Lower leg skin (tissue), 4 donors: ENCODE measurements at regions of chr13 and their contacts with region 1.

Region 1: GRCh38 chr13:98672944-98673545 is 79.4 kb downstream of the SLC15A1 start:
- DNase-seq: peak; percentile 80 to 95
- H3K4me3 ChIP-seq: no peak overlapping the region
- CTCF ChIP-seq: peak in 1 of 3 donors; percentile 86
- POLR2A ChIP-seq: no peak

Region 2: GRCh38 chr13:97359181-97360057 is 1313.6 kb before region 1 on chr13:
- intact Hi-C with region 1: no loop called
- DNase-seq: peak in 1 of 2 donors; percentile 71
- H3K4me3 ChIP-seq: no peak overlapping the region
- CTCF ChIP-seq: peak in 1 of 3 donors; percentile 52
- POLR2A ChIP-seq: no peak

Region 3: GRCh38 chr13:98098516-98098915 is 574.5 kb before region 1 on chr13:
- intact Hi-C with region 1: no loop called
- DNase-seq: no peak
- H3K4me3 ChIP-seq: no peak overlapping the region
- CTCF ChIP-seq: no peak
- POLR2A ChIP-seq: no peak

Region 4: DNA sequence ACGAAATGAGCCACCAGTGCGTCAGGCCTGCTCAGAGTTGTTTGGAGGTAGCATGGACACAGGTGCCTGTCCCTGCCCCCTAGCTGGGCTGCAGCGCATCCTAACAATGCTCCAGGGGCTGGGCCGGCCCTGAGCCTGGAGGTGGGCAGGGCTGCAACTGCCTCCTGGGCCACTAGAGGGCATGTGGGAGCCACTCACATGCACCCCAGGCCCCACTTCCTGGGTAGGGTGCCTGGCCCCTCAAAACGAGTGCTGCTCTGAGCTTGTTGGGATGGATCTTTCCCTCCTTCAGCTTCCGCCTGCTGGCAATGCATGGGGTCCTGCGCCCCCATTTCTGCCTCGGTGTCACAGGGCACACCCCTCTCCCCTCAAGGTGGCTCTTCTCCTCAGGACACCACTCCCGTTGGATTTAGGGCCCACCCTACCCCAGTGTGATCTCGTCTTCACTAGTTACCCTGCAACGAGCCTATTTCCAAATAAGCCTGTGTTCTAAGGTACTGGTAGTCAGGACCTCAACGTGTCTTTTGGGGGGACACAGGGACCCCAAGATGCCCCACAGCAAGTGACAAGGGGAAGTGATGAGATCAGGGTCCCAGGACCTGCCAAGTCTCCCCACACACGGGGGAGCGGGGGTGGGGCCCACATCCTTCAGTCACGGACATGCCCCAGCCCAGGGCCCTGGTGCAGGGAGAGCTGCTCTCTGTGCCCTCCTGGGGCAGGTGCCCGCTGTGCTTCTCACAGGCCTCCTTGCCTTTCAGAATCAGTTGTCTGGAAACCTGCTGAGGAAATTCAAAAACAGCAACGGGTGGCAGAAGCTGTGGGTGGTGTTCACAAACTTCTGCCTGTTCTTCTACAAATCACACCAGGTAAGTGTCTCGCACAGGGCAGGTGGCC is 227.5 kb before region 1 on chr13:
- intact Hi-C with region 1: loop called (anchors 5 kb)
- DNase-seq: peak in 1 of 2 donors; percentile 96
- H3K4me3 ChIP-seq: no peak overlapping the region
- CTCF ChIP-seq: peak in 1 of 3 donors; percentile 91
- POLR2A ChIP-seq: no peak